HEK293 (cell line): ENCODE measurements at regions of chr9 and their contacts with region 1.

Region 1: DNA sequence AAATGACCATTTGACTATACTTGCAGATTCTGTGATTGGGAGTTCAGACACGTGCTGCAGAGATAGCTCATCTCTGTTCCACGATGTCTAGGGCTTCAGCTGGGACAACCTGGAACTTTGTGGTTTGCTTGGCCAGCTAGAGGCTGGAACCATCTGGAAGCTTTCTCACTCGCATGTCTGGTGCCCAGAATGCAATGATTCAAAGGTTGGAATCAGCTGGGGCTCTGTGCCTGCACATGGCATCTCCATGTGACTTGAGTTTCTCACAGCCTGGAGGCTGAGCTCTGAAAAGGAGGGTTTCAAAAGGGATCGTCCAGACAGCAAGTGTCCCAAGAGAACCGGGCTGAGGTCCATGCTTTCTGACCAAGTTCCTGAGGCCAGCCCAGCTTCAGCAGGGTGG is 465.2 kb downstream of the GADD45G start:
- H3K4me3 ChIP-seq: no peak overlapping the region
- H3K27ac ChIP-seq: no peak overlapping the region
- H3K4me1 ChIP-seq: no peaks in the 10 kb centered on the region
- CTCF ChIP-seq: no peak

Region 2: GRCh38 chr9:90053027-90053426 is 17.0 kb before region 1 on chr9:
- CTCF ChIA-PET with region 1: interaction called, 10 read pairs
- POLR2A ChIA-PET with region 1: no interaction called
- H3K4me3 ChIP-seq: no peak overlapping the region
- H3K27ac ChIP-seq: no peak overlapping the region
- H3K4me1 ChIP-seq: no peaks in the 10 kb centered on the region
- CTCF ChIP-seq: no peak